Naive thymus-derived CD4-positive, alpha-beta T cell (primary cell): ENCODE measurements at regions of chr15 and their contacts with region 1.

Region 1: GRCh38 chr15:65286704-65287519 is at the start of gene PARP16:
- DNase-seq: peak; percentile 85 to 95 (median 87)
- ATAC-seq: peak; percentile 97
- H3K4me3 ChIP-seq: peak within 1 kb of the TSS; percentile 68
- H3K4me3 Mint-ChIP-seq: peak within 1 kb of the TSS; percentile 70 to 92 (median 90)
- H3K27ac ChIP-seq: peak within 1 kb of the TSS; percentile 87
- H3K27ac Mint-ChIP-seq: peak within 1 kb of the TSS; percentile 76 to 94 (median 87)
- H3K4me1 ChIP-seq: peaks cover 15 to 18% of the 10 kb centered on the region in 2 donors
- H3K4me1 Mint-ChIP-seq: peaks cover 30 to 60% (median 41%) of the 10 kb centered on the region in 7 donors
- H3K27me3 ChIP-seq: no peaks in the 10 kb centered on the region
- H3K27me3 Mint-ChIP-seq: no peaks in the 10 kb centered on the region
- total RNA-seq, gene PARP16: 10.9 to 21.5 (median 15.7) TPM

Region 2: DNA sequence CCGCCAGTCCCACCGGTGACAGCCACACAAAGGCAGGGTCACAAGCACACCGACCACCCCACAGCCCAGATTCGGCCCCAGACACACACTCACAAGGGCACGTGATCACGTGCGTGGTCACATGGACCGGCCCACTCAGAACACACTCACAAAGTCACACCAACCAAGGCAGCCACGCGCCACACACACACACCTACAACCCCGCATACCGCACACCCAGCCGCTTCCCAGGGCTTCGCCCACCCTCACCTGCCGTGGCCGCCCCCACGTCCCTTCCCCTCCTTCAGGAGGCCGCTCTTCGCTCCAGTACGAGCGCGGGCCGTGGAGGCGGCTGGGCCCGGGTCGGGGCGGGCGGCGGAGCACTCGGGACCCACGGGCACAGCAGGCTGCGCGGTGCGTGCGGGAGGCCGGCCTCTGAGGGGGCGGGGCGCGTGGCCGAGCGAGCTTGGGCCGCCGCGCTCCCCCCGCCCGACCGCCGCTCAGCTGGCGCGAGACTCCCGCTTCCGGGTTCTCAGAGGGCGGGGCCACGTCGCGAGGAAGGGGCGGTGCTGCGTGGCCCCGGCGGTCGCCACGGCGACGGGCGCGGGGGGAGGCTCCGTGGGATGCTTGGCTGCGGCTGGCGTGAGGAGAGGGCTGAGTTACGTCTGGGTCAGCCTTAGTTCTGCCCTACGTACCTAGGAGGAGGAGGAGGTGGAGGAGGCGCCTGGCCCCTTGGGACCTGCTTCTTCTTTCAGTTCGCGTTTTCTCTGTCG is 297.3 kb before region 1 on chr15 and contains the start of gene SPG21:
- CTCF ChIA-PET with region 1: no interaction called
- POLR2A ChIA-PET with region 1: no interaction called
- intact Hi-C with region 1: loop called in 1 of 2 experiments (anchors 5 kb)
- DNase-seq: peak; percentile 77 to 97 (median 85)
- ATAC-seq: peak; percentile 95
- H3K4me3 ChIP-seq: peak within 1 kb of the TSS; percentile 83
- H3K4me3 Mint-ChIP-seq: peak within 1 kb of the TSS; percentile 93 to 99 (median 97)
- H3K27ac ChIP-seq: peak within 1 kb of the TSS; percentile 76
- H3K27ac Mint-ChIP-seq: peak within 1 kb of the TSS; percentile 91 to 98 (median 94)
- H3K4me1 ChIP-seq: peaks cover 0 to 19% of the 10 kb centered on the region in 2 donors
- H3K4me1 Mint-ChIP-seq: peaks cover 33 to 55% (median 48%) of the 10 kb centered on the region in 7 donors
- H3K27me3 ChIP-seq: no peaks in the 10 kb centered on the region
- H3K27me3 Mint-ChIP-seq: no peaks in the 10 kb centered on the region
- total RNA-seq, gene SPG21: 42.5 to 72.3 (median 60.0) TPM

Region 3: GRCh38 chr15:65133548-65134200 is 153.2 kb before region 1 on chr15 and contains the start of gene PDCD7:
- CTCF ChIA-PET with region 1: no interaction called
- POLR2A ChIA-PET with region 1: interaction called, 7 read pairs
- intact Hi-C with region 1: loop called in 1 of 2 experiments (anchors 2 kb)
- DNase-seq: peak; percentile 52 to 89 (median 81)
- ATAC-seq: peak; percentile 95
- H3K4me3 ChIP-seq: peak within 1 kb of the TSS; percentile 81
- H3K4me3 Mint-ChIP-seq: peak within 1 kb of the TSS; percentile 88 to 100 (median 92)
- H3K27ac ChIP-seq: peak within 1 kb of the TSS; percentile 94
- H3K27ac Mint-ChIP-seq: peak within 1 kb of the TSS; percentile 90 to 98 (median 96)
- H3K4me1 ChIP-seq: peaks cover 6 to 14% of the 10 kb centered on the region in 2 donors
- H3K4me1 Mint-ChIP-seq: peaks cover 20 to 43% (median 35%) of the 10 kb centered on the region in 7 donors
- H3K27me3 ChIP-seq: no peaks in the 10 kb centered on the region
- H3K27me3 Mint-ChIP-seq: peaks cover 0 to 2% (median 0%) of the 10 kb centered on the region in 5 donors
- total RNA-seq, gene PDCD7: 23.0 to 38.6 (median 36.9) TPM

Region 4: GRCh38 chr15:65298731-65299130 is 11.8 kb after region 1 on chr15:
- CTCF ChIA-PET with region 1: interaction called, 7 read pairs
- POLR2A ChIA-PET with region 1: interaction called, 52 read pairs
- intact Hi-C with region 1: loop called (anchors 1 kb)
- DNase-seq: no peak
- ATAC-seq: no peak
- H3K4me3 ChIP-seq: no peak overlapping the region
- H3K4me3 Mint-ChIP-seq: peak overlapping the region; percentile 64 to 97 (median 84)
- H3K27ac ChIP-seq: peak overlapping the region; percentile 54
- H3K27ac Mint-ChIP-seq: peak overlapping the region; percentile 10 to 95 (median 78)
- H3K4me1 ChIP-seq: peaks cover 17 to 20% of the 10 kb centered on the region in 2 donors
- H3K4me1 Mint-ChIP-seq: peaks cover 12 to 42% (median 34%) of the 10 kb centered on the region in 7 donors
- H3K27me3 ChIP-seq: no peaks in the 10 kb centered on the region
- H3K27me3 Mint-ChIP-seq: peaks cover 0 to 2% (median 0%) of the 10 kb centered on the region in 5 donors